ENCODE measurements at regions of chr19 and their contacts with region 1.

Region 1: GRCh38 chr19:2391118-2391725 is 31.2 kb downstream of the TMPRSS9 start:
- DNase-seq: peak; percentile 72
- ATAC-seq: no peak
- H3K4me3 ChIP-seq: no peak overlapping the region
- H3K27ac ChIP-seq: no peak overlapping the region
- H3K4me1 ChIP-seq: peaks cover 49% of the 10 kb centered on the region
- H3K27me3 ChIP-seq: peaks cover 2 to 9% of the 10 kb centered on the region in 2 experiments; a peak in 3 of 5 replicates
- CTCF ChIP-seq: peak; percentile 79
- EP300 ChIP-seq: no peak
- POLR2A ChIP-seq: no peak
- RAD21 ChIP-seq: no peak

Region 2: DNA sequence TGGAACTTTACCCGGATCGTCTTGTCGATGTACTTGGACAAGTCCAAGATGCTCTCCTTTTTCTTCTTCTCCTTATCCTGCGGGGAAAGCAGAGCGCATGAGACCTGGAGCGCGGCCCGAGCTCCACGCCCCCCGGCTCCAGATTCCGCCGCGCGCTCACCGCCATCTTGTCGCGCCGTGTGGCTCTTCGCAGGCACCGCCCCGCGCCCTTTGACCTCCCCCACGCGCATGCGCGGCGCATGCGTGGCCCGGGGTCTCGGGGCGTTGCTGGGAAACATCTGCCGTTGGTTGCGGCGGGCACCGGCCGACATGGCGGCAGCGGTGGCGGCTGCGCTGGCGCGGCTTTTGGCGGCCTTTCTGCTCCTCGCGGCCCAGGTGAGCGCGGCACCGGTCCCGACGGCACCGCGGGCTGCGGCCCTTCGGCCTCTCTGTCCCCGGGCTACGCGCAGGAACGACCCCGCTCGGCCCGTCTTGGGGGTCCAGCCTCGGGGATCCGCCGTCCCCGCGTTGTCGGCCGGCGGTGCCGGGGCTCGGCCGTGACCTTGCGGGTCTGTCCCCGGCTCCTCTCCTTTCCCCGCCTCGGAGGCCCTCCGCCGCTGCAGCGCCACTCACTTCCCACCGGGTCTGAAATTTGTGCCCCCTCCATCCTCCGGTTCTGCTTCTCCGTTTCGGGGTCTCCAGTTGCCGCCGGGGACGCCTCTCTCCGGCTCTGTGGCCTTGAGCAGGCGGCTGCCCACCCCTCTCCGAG is 62.6 kb before region 1 on chr19 and contains the starts of genes LSM7 and SPPL2B:
- CTCF ChIA-PET with region 1: interaction called, 3 read pairs
- POLR2A ChIA-PET with region 1: interaction called, 35 read pairs
- in situ Hi-C with region 1: no loop called
- intact Hi-C with region 1: loop called (anchors 2 kb)
- DNase-seq: peak; percentile 72
- ATAC-seq: peak; percentile 49
- H3K4me3 ChIP-seq: peak within 1 kb of the TSS; percentile 87 to 94 (median 89)
- H3K27ac ChIP-seq: peak within 1 kb of the TSS; percentile 82
- H3K4me1 ChIP-seq: peaks cover 55% of the 10 kb centered on the region
- H3K27me3 ChIP-seq: no peaks in the 10 kb centered on the region; a peak in 1 of 5 replicates
- CTCF ChIP-seq: no peak
- EP300 ChIP-seq: no peak
- POLR2A ChIP-seq: peak; percentile 79 to 89
- RAD21 ChIP-seq: peak; percentile 47; the same call in 1 of the 2 replicates
- total RNA-seq, gene LSM7: 140 and 152 TPM in 2 replicates
- total RNA-seq, gene SPPL2B: 3.4 and 15.2 TPM in 2 replicates

Region 3: DNA sequence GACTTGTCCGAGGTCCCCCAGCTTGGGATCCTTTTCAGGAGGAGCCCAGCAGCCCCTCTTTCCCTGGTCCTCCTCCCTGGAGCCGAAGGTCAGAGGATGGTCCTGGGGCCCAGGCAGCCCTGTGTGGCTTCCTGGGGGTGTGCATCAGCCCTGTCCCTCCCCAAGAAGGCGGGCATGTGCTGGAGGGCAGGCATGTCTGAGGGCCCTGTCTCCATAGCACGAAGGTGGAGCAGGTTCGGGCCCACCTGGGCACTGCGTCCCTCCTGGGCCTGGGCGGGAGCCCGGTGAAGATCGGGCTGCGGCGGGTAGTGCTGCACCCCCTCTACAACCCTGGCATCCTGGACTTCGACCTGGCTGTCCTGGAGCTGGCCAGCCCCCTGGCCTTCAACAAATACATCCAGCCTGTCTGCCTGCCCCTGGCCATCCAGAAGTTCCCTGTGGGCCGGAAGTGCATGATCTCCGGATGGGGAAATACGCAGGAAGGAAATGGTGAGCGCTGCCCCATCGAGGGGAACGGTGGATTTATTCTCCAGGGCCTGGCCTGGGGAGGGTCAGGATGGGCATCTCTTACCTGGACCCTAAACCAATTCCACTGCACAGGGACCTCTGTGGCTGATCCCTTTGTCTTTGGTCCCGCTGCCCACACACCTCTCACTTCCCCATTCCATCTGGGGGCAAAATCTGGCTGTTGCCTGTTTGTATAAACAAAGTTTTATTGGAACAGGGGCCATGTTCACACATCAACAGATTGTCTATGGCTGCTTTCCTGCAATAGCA is 25.3 kb after region 1 on chr19:
- CTCF ChIA-PET with region 1: no interaction called
- POLR2A ChIA-PET with region 1: interaction called, 92 read pairs
- in situ Hi-C with region 1: no loop called
- intact Hi-C with region 1: no loop called
- DNase-seq: peak; percentile 89
- ATAC-seq: peak; percentile 93
- H3K4me3 ChIP-seq: peak overlapping the region in 2 of 3 experiments; percentile 2 to 49; a peak in 1 of 6 replicates
- H3K27ac ChIP-seq: peak overlapping the region; percentile 78
- H3K4me1 ChIP-seq: peaks cover 26% of the 10 kb centered on the region
- H3K27me3 ChIP-seq: no peaks in the 10 kb centered on the region
- CTCF ChIP-seq: no peak
- EP300 ChIP-seq: peak in 1 of 2 experiments; percentile 35; a peak in 2 of 4 replicates
- POLR2A ChIP-seq: peak; percentile 68 to 81
- RAD21 ChIP-seq: peak; percentile 61; the same call in 1 of the 2 replicates